ENCODE measurements at regions of chr1 and their contacts with region 1.

Region 1: GRCh38 chr1:63316984-63317816 is 5.2 kb upstream of the FOXD3 start:
- DNase-seq: no peak
- H3K4me3 ChIP-seq: peak overlapping the region; percentile 44 to 66 (median 52)
- H3K27ac ChIP-seq: peak overlapping the region in 1 of 4 donors; percentile 6
- H3K4me1 ChIP-seq: peaks cover 14 to 51% (median 16%) of the 10 kb centered on the region in 3 donors
- H3K27me3 ChIP-seq: peaks cover 13 to 97% (median 50%) of the 10 kb centered on the region in 4 donors
- CTCF ChIP-seq: peak; percentile 19 to 77 (median 57)
- POLR2A ChIP-seq: no peak

Region 2: GRCh38 chr1:63442141-63442475 is 124.9 kb after region 1 on chr1:
- intact Hi-C with region 1: loop called (anchors 5 kb)
- DNase-seq: no peak
- H3K4me3 ChIP-seq: no peak overlapping the region
- H3K27ac ChIP-seq: no peak overlapping the region
- H3K4me1 ChIP-seq: no peaks in the 10 kb centered on the region
- H3K27me3 ChIP-seq: no peaks in the 10 kb centered on the region
- CTCF ChIP-seq: no peak
- POLR2A ChIP-seq: no peak

Region 3: GRCh38 chr1:63522891-63523728 is 205.9 kb after region 1 on chr1 and contains the starts of genes EFCAB7 and ITGB3BP:
- intact Hi-C with region 1: loop called (anchors 10 kb)
- DNase-seq: peak; percentile 46
- H3K4me3 ChIP-seq: peak within 1 kb of the TSS; percentile 55 to 82 (median 73)
- H3K27ac ChIP-seq: peak within 1 kb of the TSS; percentile 81 to 98 (median 95)
- H3K4me1 ChIP-seq: peaks cover 0 to 26% (median 5%) of the 10 kb centered on the region in 3 donors
- H3K27me3 ChIP-seq: no peaks in the 10 kb centered on the region
- CTCF ChIP-seq: peak in 1 of 6 experiments; percentile 6
- POLR2A ChIP-seq: no peak
- total RNA-seq, gene EFCAB7: 1.1 to 4.2 (median 2.7) TPM
- total RNA-seq, gene ITGB3BP: 7.3 to 22.3 (median 12.7) TPM

Measured in esophagus squamous epithelium (tissue), 5 donors.